Transverse colon (tissue), 4 donors: ENCODE measurements at regions of chr14 and their contacts with region 1.

Region 1: GRCh38 chr14:100654814-100655740 is 67.9 kb upstream of the BEGAIN start:
- DNase-seq: peak; percentile 56
- H3K4me3 ChIP-seq: peak overlapping the region in 2 of 4 donors; percentile 27 to 41
- H3K27ac ChIP-seq: no peak overlapping the region
- H3K4me1 ChIP-seq: peaks cover 0 to 8% (median 7%) of the 10 kb centered on the region in 4 donors
- H3K27me3 ChIP-seq: peaks cover 28% of the 10 kb centered on the region
- CTCF ChIP-seq: peak; percentile 65 to 88 (median 75)
- EP300 ChIP-seq: no peak
- POLR2A ChIP-seq: no peak

Region 2: DNA sequence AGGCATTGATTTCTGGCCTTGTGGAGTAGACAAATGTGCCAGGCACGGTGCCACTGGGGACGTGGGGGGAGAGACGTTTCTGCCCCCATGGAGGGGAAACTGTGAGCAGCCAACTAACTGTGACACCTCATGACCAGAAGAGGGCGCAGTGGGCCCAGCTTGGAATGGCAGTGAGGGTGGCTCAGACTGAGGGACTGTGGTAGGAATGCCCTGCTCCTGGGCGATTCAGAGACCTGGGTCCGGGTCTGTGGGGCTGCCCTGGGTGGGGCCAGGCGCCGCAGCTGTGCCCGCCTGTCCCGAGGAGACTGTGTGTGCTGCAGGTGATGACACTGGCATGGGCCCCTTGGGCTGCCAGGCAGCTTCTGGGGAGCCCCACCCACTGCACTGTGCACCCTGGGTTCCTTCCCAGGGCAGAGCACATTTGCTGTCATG is 271.3 kb before region 1 on chr14:
- in situ Hi-C with region 1: loop called in 1 of 4 experiments (anchors 5 kb)
- intact Hi-C with region 1: no loop called
- DNase-seq: peak; percentile 75
- H3K4me3 ChIP-seq: no peak overlapping the region
- H3K27ac ChIP-seq: no peak overlapping the region
- H3K4me1 ChIP-seq: peaks cover 0 to 31% (median 14%) of the 10 kb centered on the region in 4 donors
- H3K27me3 ChIP-seq: no peaks in the 10 kb centered on the region
- CTCF ChIP-seq: peak; percentile 77 to 90 (median 79)
- EP300 ChIP-seq: no peak
- POLR2A ChIP-seq: no peak

Region 3: DNA sequence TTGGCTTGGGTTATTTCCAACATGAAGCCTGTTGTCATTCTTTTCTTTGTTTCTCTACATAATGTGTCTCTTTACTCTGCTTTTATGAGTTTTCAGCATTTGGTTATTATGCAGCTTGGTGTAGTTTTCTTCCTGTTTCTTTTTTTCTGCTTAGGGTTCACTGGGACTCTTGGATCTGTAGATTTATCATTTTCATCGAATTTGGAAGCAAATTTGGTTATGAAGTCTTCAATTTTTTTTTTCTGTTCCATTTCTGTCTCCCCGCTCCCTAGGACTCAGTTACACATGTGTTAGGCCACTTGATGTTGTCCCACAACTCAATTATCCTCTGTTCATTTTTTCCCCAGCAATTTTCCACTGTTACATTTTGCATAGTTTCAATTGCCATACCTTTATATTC is 54.0 kb before region 1 on chr14:
- in situ Hi-C with region 1: no loop called
- intact Hi-C with region 1: loop called (anchors 1 kb)
- DNase-seq: no peak
- H3K4me3 ChIP-seq: no peak overlapping the region
- H3K27ac ChIP-seq: no peak overlapping the region
- H3K4me1 ChIP-seq: no peaks in the 10 kb centered on the region
- H3K27me3 ChIP-seq: peaks cover 11% of the 10 kb centered on the region
- CTCF ChIP-seq: no peak
- EP300 ChIP-seq: no peak
- POLR2A ChIP-seq: no peak

Region 4: DNA sequence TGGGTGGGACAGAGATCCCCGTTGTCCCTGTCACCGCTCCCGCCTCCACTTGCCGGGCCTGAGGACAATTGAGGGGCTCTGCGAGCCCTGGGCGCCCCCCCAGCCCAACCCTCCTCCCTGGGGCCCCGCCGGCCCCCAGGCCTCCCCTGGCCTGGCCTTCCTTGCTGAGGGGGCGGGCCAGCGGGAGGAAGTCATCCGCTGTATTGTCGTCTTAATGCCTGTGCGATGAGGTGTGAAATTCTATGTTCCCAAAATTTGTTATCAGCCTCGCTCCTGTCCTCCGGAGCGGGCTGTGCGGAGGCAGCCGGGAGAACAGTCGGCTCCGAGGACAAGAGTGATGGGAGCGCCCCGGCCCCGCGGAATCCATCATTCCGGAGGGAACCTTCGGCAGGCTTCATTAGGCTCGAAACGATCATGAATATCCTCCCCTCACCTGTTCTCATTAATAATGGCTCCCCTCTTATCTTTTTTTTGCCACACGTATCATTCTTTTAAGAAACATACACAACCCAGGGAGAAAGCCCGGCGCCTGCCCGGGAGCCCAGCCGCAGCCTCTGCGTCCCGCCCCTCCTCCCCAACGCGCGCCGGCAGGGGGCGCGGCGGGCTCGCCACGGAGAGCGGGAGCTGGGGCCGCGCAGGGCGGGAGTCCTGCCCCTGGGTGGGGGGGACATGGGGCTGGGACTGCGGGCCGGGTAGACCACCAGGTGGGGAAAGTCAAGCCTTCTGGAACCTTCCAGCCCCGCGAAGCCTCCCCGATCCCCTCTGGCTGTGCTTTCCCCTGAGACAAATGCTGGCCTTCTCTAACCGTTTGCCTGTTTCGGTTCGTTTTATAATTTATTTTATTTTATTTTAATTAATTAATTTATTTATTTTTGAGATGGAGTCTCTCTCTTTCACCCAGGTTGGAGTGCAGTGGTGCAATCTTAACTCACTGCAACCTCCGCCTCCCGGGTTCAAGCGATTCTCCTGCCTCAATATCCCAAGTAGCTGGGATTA is 54.5 kb after region 1 on chr14:
- in situ Hi-C with region 1: no loop called
- intact Hi-C with region 1: no loop called
- DNase-seq: no peak
- H3K4me3 ChIP-seq: peak overlapping the region in 2 of 4 donors; percentile 3 to 21
- H3K27ac ChIP-seq: peak overlapping the region; percentile 13 to 51 (median 20)
- H3K4me1 ChIP-seq: peaks cover 0 to 19% (median 13%) of the 10 kb centered on the region in 4 donors
- H3K27me3 ChIP-seq: peaks cover 19% of the 10 kb centered on the region
- CTCF ChIP-seq: peak in 4 of 5 experiments; percentile 14 to 83 (median 55)
- EP300 ChIP-seq: no peak
- POLR2A ChIP-seq: no peak